Transverse colon (tissue), 4 donors: ENCODE measurements at regions of chr13 and their contacts with region 1.

Region 1: DNA sequence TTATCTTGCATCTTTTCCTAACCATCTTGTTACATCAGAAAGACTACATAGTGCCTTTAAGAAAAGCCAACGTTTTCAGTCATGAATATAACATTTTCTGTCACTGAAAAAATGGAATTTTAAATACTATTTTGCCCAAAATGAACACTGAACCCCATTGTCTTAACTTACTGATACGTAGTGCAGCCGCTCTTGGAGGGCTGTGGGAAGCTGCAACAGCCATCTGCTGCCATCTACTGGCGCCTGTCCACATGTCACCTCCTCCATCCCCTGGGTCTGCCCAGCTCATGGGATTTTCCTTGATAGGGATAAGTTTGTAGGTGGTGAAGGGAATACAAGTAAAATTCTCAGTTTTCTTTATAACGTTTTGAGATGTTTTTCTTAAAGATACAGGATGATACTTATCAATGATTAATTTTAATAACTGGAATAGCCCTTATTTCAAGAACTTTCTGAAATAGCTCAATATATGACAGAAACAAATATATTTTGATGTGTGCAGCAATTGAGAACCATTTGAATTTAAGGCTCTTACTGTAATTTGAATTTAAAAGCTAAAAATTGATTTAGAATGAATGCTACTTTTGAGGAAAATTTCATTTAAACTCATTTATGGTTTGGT is 73.7 kb downstream of the GGACT start:
- DNase-seq: peak; percentile 80
- H3K4me3 ChIP-seq: no peak overlapping the region
- H3K27ac ChIP-seq: no peak overlapping the region
- H3K4me1 ChIP-seq: peaks cover 0 to 24% (median 5%) of the 10 kb centered on the region in 4 donors
- H3K27me3 ChIP-seq: no peaks in the 10 kb centered on the region
- CTCF ChIP-seq: peak; percentile 84 to 92 (median 88)
- EP300 ChIP-seq: no peak
- POLR2A ChIP-seq: no peak

Region 2: GRCh38 chr13:99916366-99917103 is 598.4 kb before region 1 on chr13:
- in situ Hi-C with region 1: loop called in 2 of 4 experiments (anchors 10 to 25 kb)
- intact Hi-C with region 1: no loop called
- DNase-seq: no peak
- H3K4me3 ChIP-seq: no peak overlapping the region
- H3K27ac ChIP-seq: no peak overlapping the region
- H3K4me1 ChIP-seq: no peaks in the 10 kb centered on the region
- H3K27me3 ChIP-seq: peaks cover 10% of the 10 kb centered on the region
- CTCF ChIP-seq: peak; percentile 65 to 96 (median 84)
- EP300 ChIP-seq: no peak
- POLR2A ChIP-seq: no peak

Region 3: GRCh38 chr13:99925999-99926731 is 588.7 kb before region 1 on chr13:
- in situ Hi-C with region 1: loop called in 2 of 4 experiments (anchors 25 kb)
- intact Hi-C with region 1: no loop called
- DNase-seq: peak; percentile 54
- H3K4me3 ChIP-seq: peak overlapping the region in 3 of 4 donors; percentile 7 to 26 (median 16)
- H3K27ac ChIP-seq: no peak overlapping the region
- H3K4me1 ChIP-seq: no peaks in the 10 kb centered on the region
- H3K27me3 ChIP-seq: peaks cover 8% of the 10 kb centered on the region
- CTCF ChIP-seq: no peak
- EP300 ChIP-seq: no peak
- POLR2A ChIP-seq: no peak

Region 4: GRCh38 chr13:99980201-99980823 is 534.6 kb before region 1 on chr13:
- in situ Hi-C with region 1: no loop called
- intact Hi-C with region 1: no loop called
- DNase-seq: peak; percentile 69
- H3K4me3 ChIP-seq: peak overlapping the region in 3 of 4 donors; percentile 32 to 64 (median 40)
- H3K27ac ChIP-seq: no peak overlapping the region
- H3K4me1 ChIP-seq: peaks cover 10 to 59% (median 39%) of the 10 kb centered on the region in 4 donors
- H3K27me3 ChIP-seq: peaks cover 100% of the 10 kb centered on the region
- CTCF ChIP-seq: no peak
- EP300 ChIP-seq: no peak
- POLR2A ChIP-seq: no peak

Region 5: DNA sequence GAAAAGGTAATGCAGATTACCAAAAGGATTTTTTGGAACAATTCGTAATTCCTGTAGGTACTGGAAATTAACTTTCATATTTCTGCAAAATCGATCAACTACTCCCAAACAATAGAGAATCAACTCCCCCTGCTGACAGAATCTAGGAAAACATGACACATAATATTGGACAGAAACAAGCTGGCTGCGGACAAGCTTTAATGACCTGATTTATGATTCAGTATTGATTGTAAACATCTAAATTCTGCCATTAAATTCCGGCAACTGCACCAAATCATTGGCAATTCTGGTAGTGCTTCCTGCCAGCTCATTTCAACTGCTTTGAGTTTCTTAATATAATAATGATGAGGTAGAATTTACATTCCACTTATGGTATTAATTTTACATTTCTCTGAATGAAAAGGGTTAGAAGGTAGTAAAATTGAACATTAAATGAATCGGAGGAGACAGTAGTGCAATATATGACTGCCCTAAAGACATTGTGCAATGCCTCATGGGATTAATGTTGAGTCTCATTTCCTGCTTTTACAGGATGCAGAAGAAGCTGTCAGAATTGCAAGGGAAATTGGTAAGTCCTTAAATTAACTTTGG is 279.5 kb before region 1 on chr13:
- in situ Hi-C with region 1: loop called in 1 of 4 experiments (anchors 25 kb)
- intact Hi-C with region 1: no loop called
- DNase-seq: no peak
- H3K4me3 ChIP-seq: no peak overlapping the region
- H3K27ac ChIP-seq: no peak overlapping the region
- H3K4me1 ChIP-seq: peaks cover 0 to 31% (median 24%) of the 10 kb centered on the region in 4 donors
- H3K27me3 ChIP-seq: no peaks in the 10 kb centered on the region
- CTCF ChIP-seq: peak; percentile 42 to 72 (median 56)
- EP300 ChIP-seq: no peak
- POLR2A ChIP-seq: no peak

Region 6: DNA sequence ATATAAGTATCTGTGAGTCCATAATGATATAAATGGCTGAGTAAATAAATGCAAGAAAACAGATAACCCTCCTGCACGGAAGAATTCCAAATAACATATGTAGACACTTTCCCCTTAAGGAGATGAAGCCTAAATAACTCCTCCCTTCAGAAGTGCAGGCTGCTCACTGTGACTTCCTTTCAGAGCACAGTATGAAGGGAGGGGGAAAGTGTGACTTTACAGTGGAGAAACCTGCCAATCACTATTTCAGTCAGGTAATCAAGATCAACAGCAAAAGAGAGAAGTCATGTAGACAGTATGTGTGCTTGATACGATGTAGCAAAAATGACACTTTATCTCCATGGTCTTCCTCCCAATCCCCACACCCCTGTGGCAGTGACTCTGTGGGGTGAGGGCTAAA is 66.6 kb after region 1 on chr13:
- in situ Hi-C with region 1: no loop called
- intact Hi-C with region 1: no loop called
- DNase-seq: no peak
- H3K4me3 ChIP-seq: no peak overlapping the region
- H3K27ac ChIP-seq: no peak overlapping the region
- H3K4me1 ChIP-seq: no peaks in the 10 kb centered on the region
- H3K27me3 ChIP-seq: no peaks in the 10 kb centered on the region
- CTCF ChIP-seq: no peak
- EP300 ChIP-seq: no peak
- POLR2A ChIP-seq: no peak

Region 7: DNA sequence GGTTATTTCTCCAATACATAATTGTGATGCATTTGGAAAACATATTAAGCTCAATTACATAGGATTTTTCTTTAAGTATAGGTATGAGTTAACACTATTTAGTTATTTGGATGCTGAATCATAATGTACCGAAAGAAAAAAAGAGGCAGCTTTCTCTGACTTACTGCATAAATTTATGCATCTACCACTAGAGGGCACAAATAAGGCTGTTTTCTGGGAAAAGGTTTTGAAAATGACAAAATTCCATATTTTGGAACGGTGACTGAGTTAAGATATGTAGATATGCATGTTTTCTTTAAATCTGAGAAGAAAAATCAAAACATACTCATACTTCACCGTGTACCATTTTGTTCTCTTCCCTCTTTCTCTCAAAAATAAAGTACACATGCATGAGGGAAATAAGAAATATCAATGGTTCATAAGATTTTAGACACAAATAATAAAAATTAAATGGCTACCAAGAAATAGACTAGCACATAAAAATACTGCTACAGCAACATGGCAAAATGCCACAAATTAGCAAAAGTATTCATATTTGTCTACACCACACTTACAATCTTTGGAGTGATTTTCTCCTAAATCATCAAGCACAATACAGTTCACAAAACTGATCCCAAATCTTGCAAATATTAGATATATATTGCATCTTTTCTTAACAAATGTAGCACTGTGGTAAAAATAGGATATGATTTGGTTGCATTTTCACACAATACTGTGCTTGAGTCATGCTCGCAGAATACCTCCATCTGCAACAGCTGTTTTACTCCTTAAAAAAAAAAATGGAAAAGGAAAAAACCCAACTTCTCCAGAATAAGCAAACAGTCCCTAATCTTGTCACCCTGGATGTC is 1627.0 kb after region 1 on chr13:
- in situ Hi-C with region 1: no loop called
- intact Hi-C with region 1: no loop called
- DNase-seq: no peak
- H3K4me3 ChIP-seq: no peak overlapping the region
- H3K27ac ChIP-seq: no peak overlapping the region
- H3K4me1 ChIP-seq: no peaks in the 10 kb centered on the region
- H3K27me3 ChIP-seq: no peaks in the 10 kb centered on the region
- CTCF ChIP-seq: peak; percentile 48 to 58 (median 54)
- EP300 ChIP-seq: no peak
- POLR2A ChIP-seq: no peak